ENCODE measurements at regions of chr5 and their contacts with region 1.

Region 1: GRCh38 chr5:148820461-148821395 is 5.7 kb upstream of the ADRB2 start:
- H3K4me3 Mint-ChIP-seq: no peak overlapping the region
- H3K27ac Mint-ChIP-seq: no peak overlapping the region
- H3K4me1 Mint-ChIP-seq: peaks cover 57% of the 10 kb centered on the region
- H3K27me3 Mint-ChIP-seq: no peaks in the 10 kb centered on the region

Region 2: DNA sequence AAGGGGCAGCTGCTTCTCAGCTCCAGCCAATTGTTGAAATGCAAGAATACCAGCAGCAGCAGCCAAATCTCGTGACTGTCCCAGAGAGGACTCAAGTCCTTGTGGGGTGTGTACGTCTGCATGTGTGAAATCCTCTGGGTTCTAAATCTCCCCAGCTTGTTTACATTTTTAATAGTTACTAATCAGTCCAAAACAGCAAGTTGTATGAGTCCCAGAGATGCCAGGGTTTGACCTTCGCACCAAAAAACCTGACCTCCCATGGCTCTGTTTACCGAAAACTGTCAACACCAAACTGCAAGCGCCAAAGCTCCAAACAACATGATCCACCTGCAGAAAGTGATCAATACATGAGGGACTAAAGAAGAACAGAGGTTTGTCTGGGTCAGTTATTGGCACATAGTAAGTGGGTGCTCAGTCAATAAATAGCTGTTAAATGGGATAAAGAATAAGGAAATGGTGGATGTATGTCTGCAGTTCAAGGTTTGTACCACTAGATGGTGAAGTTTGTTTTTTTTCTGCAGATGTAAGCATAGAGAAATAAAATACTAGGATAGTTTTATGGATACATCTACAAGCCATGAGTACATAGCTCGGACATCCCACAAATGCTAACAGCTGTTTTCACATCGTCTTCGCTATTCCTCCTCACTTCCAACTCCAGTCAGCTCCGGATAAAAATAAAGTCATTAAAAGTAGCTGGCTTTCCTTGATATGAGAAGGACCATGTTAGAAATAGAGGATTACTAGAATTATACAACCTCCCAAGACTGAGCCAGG is 79.6 kb before region 1 on chr5:
- intact Hi-C with region 1: loop called (anchors 5 kb)
- H3K4me3 Mint-ChIP-seq: no peak overlapping the region
- H3K27ac Mint-ChIP-seq: peak overlapping the region; percentile 93
- H3K4me1 Mint-ChIP-seq: peaks cover 66% of the 10 kb centered on the region
- H3K27me3 Mint-ChIP-seq: no peaks in the 10 kb centered on the region

Region 3: GRCh38 chr5:148776780-148777179 is 43.9 kb before region 1 on chr5:
- intact Hi-C with region 1: loop called (anchors 5 kb)
- H3K4me3 Mint-ChIP-seq: no peak overlapping the region
- H3K27ac Mint-ChIP-seq: no peak overlapping the region
- H3K4me1 Mint-ChIP-seq: peaks cover 43% of the 10 kb centered on the region
- H3K27me3 Mint-ChIP-seq: no peaks in the 10 kb centered on the region